B cell (primary cell): ENCODE measurements at regions of chr2 and their contacts with region 1.

Region 1: GRCh38 chr2:98702127-98702802 is 28.7 kb downstream of the MGAT4A start:
- DNase-seq: no peak
- ATAC-seq: no peak
- H3K4me3 ChIP-seq: no peak overlapping the region
- H3K4me3 Mint-ChIP-seq: no peak overlapping the region
- H3K27ac ChIP-seq: no peak overlapping the region
- H3K27ac Mint-ChIP-seq: peak overlapping the region; percentile 32
- H3K4me1 ChIP-seq: peaks cover 0 to 9% of the 10 kb centered on the region in 2 donors
- H3K4me1 Mint-ChIP-seq: peaks cover 27% of the 10 kb centered on the region
- H3K27me3 ChIP-seq: no peaks in the 10 kb centered on the region
- H3K27me3 Mint-ChIP-seq: no peaks in the 10 kb centered on the region
- CTCF ChIP-seq: no peak

Region 2: GRCh38 chr2:98654699-98655495 is 47.4 kb before region 1 on chr2:
- CTCF ChIA-PET with region 1: interaction called, 4 read pairs
- POLR2A ChIA-PET with region 1: no interaction called
- intact Hi-C with region 1: loop called (anchors 10 kb)
- DNase-seq: peak; percentile 38
- ATAC-seq: peak; percentile 68
- H3K4me3 ChIP-seq: no peak overlapping the region
- H3K4me3 Mint-ChIP-seq: peak overlapping the region; percentile 6
- H3K27ac ChIP-seq: peak overlapping the region in 1 of 2 donors; percentile 37
- H3K27ac Mint-ChIP-seq: peak overlapping the region; percentile 71
- H3K4me1 ChIP-seq: peaks cover 5 to 8% of the 10 kb centered on the region in 2 donors
- H3K4me1 Mint-ChIP-seq: peaks cover 29% of the 10 kb centered on the region
- H3K27me3 ChIP-seq: no peaks in the 10 kb centered on the region
- H3K27me3 Mint-ChIP-seq: no peaks in the 10 kb centered on the region
- CTCF ChIP-seq: no peak